Mammary epithelial cell (primary cell): ENCODE measurements at regions of chr22 and their contacts with region 1.

Region 1: GRCh38 chr22:42959576-42960509 is 55.1 kb downstream of the PACSIN2 start:
- DNase-seq: peak; percentile 83
- H3K4me3 ChIP-seq: peak overlapping the region; percentile 30 to 52 (median 39)
- H3K27ac ChIP-seq: peak overlapping the region; percentile 72
- H3K4me1 ChIP-seq: peaks cover 62% of the 10 kb centered on the region
- H3K27me3 ChIP-seq: no peaks in the 10 kb centered on the region
- CTCF ChIP-seq: no peak

Region 2: GRCh38 chr22:42863349-42863961 is 96.4 kb before region 1 on chr22:
- CTCF ChIA-PET with region 1: interaction called, 29 read pairs
- dilution Hi-C with region 1: no loop called
- in situ Hi-C with region 1: no loop called
- intact Hi-C with region 1: loop called (anchors 5 kb)
- DNase-seq: peak; percentile 85
- H3K4me3 ChIP-seq: no peak overlapping the region
- H3K27ac ChIP-seq: peak overlapping the region; percentile 57
- H3K4me1 ChIP-seq: peaks cover 13% of the 10 kb centered on the region
- H3K27me3 ChIP-seq: no peaks in the 10 kb centered on the region
- CTCF ChIP-seq: no peak

Region 3: GRCh38 chr22:42868751-42869251 is 91.0 kb before region 1 on chr22:
- CTCF ChIA-PET with region 1: interaction called, 29 read pairs
- dilution Hi-C with region 1: no loop called
- in situ Hi-C with region 1: no loop called
- intact Hi-C with region 1: loop called (anchors 5 kb)
- DNase-seq: no peak
- H3K4me3 ChIP-seq: no peak overlapping the region
- H3K27ac ChIP-seq: no peak overlapping the region
- H3K4me1 ChIP-seq: peaks cover 4% of the 10 kb centered on the region
- H3K27me3 ChIP-seq: no peaks in the 10 kb centered on the region
- CTCF ChIP-seq: no peak

Region 4: DNA sequence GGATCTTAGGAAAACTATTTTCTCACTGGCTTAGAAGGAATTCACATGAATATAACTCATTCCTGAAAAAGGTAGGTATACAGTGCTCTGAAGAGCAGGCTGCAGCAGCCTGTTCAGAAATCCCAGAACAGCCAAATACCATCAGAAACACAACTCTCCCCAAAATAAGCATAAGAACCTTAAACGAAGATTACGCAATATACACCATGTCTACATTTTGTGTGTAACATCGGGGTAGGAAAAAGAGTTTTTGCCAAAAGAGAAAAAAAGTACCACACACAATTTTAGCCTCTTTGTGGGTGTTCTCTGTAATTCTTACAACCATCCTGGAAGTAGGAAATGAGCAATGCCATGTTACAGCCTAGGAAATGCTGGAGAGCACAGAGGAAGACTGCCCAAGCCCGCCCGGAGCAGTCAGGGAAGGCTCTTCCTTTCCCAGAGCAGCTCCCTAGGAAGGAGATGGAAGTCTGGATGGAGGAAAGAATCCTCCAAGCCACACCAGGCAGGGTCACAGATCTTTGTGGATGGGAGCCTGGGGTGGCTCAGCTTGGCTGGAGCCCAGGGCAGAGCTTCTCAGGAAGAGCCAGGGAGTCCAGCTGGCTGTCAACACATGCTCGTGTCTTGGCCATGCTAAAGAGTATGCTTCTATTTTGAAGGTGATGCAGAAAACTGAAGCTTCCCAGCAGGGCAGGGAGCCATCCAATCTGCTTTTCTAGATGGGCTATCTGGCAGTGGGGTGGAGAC is 53.1 kb before region 1 on chr22:
- CTCF ChIA-PET with region 1: no interaction called
- dilution Hi-C with region 1: no loop called
- in situ Hi-C with region 1: no loop called
- intact Hi-C with region 1: loop called (anchors 5 kb)
- DNase-seq: no peak
- H3K4me3 ChIP-seq: no peak overlapping the region
- H3K27ac ChIP-seq: no peak overlapping the region
- H3K4me1 ChIP-seq: peaks cover 30% of the 10 kb centered on the region
- H3K27me3 ChIP-seq: no peaks in the 10 kb centered on the region
- CTCF ChIP-seq: no peak

Region 5: GRCh38 chr22:42919199-42919598 is 40.6 kb before region 1 on chr22:
- CTCF ChIA-PET with region 1: no interaction called
- dilution Hi-C with region 1: no loop called
- in situ Hi-C with region 1: no loop called
- intact Hi-C with region 1: loop called (anchors 5 kb)
- DNase-seq: peak; percentile 44
- H3K4me3 ChIP-seq: peak overlapping the region in 1 of 3 experiments; percentile 10
- H3K27ac ChIP-seq: peak overlapping the region; percentile 65
- H3K4me1 ChIP-seq: peaks cover 48% of the 10 kb centered on the region
- H3K27me3 ChIP-seq: no peaks in the 10 kb centered on the region
- CTCF ChIP-seq: no peak

Region 6: DNA sequence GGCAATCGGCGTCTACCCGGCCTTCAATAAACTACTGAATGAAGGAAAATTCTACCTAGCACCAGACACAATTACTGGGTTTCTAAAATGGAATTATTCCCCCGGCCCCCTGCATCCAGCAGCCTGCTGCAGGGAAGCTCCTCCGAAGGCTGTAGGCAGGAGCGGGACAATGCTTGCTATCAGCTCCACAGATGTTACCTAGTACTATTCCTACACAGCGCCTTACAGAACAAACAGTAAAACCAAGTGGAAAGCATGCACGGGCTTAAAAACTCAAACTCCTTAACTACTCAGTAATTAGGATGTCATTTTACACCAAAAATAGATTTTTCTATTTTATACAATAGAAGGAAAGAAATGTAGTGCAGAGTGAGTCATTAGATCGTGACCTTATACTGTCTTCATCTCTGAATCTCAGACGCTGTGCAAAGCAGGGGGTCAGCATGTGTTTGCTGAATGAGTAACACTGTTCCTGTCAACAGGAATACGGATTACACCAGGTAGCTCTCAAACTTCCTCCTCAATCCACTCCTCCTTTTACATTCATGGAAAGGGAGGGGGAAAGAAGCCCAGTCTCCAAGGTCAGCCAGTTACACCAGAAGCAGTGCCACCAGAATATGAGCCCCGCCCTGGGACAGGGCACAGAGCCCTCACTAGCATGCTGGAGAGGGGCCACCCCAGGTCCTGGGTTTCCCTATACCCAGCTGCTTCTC is 19.7 kb before region 1 on chr22:
- CTCF ChIA-PET with region 1: no interaction called
- dilution Hi-C with region 1: no loop called
- in situ Hi-C with region 1: no loop called
- intact Hi-C with region 1: loop called (anchors 1 kb)
- DNase-seq: peak; percentile 72
- H3K4me3 ChIP-seq: no peak overlapping the region
- H3K27ac ChIP-seq: peak overlapping the region; percentile 80
- H3K4me1 ChIP-seq: peaks cover 47% of the 10 kb centered on the region
- H3K27me3 ChIP-seq: no peaks in the 10 kb centered on the region
- CTCF ChIP-seq: no peak

Region 7: DNA sequence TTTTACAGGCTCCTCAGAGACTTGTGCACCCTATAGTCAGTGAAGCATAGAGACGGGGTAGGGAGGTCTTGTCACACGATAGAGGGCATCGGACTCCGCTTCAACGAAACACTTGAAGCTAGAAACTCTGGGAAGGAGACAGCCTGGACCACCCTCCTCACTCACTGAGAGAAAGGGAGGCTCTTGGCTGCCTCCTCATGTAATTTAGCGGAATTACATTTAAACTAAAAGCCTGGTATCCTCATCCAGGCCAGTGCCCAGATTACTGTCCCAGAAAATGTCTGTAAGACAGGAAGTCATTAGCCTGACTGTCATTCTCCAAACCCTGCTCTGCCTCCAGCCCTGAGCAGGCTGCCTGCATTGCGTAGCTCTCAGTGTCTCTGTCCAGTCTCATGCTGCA is 93.3 kb after region 1 on chr22:
- CTCF ChIA-PET with region 1: no interaction called
- dilution Hi-C with region 1: no loop called
- in situ Hi-C with region 1: no loop called
- intact Hi-C with region 1: no loop called
- DNase-seq: no peak
- H3K4me3 ChIP-seq: no peak overlapping the region
- H3K27ac ChIP-seq: no peak overlapping the region
- H3K4me1 ChIP-seq: no peaks in the 10 kb centered on the region
- H3K27me3 ChIP-seq: no peaks in the 10 kb centered on the region
- CTCF ChIP-seq: peak in 1 of 2 donors; percentile 18

Region 8: GRCh38 chr22:43126480-43127165 is 166.8 kb after region 1 on chr22:
- CTCF ChIA-PET with region 1: no interaction called
- dilution Hi-C with region 1: no loop called
- in situ Hi-C with region 1: no loop called
- intact Hi-C with region 1: no loop called
- DNase-seq: peak; percentile 79
- H3K4me3 ChIP-seq: no peak overlapping the region
- H3K27ac ChIP-seq: peak overlapping the region; percentile 69
- H3K4me1 ChIP-seq: peaks cover 24% of the 10 kb centered on the region
- H3K27me3 ChIP-seq: no peaks in the 10 kb centered on the region
- CTCF ChIP-seq: no peak

Region 9: GRCh38 chr22:43187171-43188099 is 227.6 kb after region 1 on chr22:
- CTCF ChIA-PET with region 1: no interaction called
- dilution Hi-C with region 1: no loop called
- in situ Hi-C with region 1: no loop called
- intact Hi-C with region 1: no loop called
- DNase-seq: peak; percentile 92
- H3K4me3 ChIP-seq: peak overlapping the region; percentile 41 to 50 (median 43)
- H3K27ac ChIP-seq: peak overlapping the region; percentile 74
- H3K4me1 ChIP-seq: peaks cover 30% of the 10 kb centered on the region
- H3K27me3 ChIP-seq: no peaks in the 10 kb centered on the region
- CTCF ChIP-seq: peak; percentile 40 to 65